H1 (cell line): ENCODE measurements at regions of chr21 and their contacts with region 1.

Region 1: GRCh38 chr21:44063151-44063912 is 43.9 kb upstream of the PWP2 start:
- DNase-seq: no peak
- H3K4me3 ChIP-seq: no peak overlapping the region
- H3K27ac ChIP-seq: no peak overlapping the region
- H3K4me1 ChIP-seq: no peaks in the 10 kb centered on the region; a peak in 1 of 7 replicates
- H3K27me3 ChIP-seq: no peaks in the 10 kb centered on the region
- CTCF ChIP-seq: no peak
- EP300 ChIP-seq: no peak
- POLR2A ChIP-seq: no peak
- RAD21 ChIP-seq: no peak

Region 2: DNA sequence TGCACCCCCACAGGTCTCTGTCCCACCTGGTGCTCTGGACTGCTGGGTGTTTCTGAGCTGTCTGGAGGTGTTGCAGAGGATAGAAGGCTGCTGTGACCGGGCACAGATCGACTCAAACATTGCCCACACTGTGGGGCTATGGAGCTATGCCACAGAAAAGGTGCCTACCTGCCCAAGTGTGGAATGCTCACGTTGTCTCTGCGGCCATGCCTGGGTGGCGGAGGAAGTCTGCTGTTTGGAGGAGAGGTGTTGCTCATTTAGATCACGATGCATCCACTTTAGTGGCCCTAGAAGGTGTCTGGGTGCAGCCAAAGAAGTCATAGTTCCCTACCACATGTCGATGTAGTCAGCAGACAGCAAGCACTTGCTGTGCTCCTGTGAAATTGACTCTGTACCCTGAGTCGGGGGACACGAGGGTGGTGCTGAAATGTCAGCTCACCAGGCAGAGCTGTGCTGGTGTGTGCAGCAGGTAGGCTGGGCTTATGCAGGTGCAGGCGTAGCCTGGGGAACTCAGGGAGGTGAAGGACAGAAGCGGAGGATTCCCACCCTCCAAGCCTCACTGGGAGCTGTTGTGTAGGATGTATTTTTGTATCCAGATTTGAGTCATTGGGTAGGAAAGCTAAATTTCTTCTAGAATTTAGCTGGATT is 11.1 kb after region 1 on chr21:
- CTCF ChIA-PET with region 1: interaction called, 12 read pairs
- POLR2A ChIA-PET with region 1: interaction called, 5 read pairs
- DNase-seq: no peak
- H3K4me3 ChIP-seq: no peak overlapping the region
- H3K27ac ChIP-seq: no peak overlapping the region
- H3K4me1 ChIP-seq: peaks cover 0 to 4% (median 0%) of the 10 kb centered on the region in 4 experiments; a peak in 2 of 7 replicates
- H3K27me3 ChIP-seq: no peaks in the 10 kb centered on the region
- CTCF ChIP-seq: no peak
- EP300 ChIP-seq: no peak
- POLR2A ChIP-seq: no peak
- RAD21 ChIP-seq: no peak